A673 (cell line): ENCODE measurements at regions of chr9 and their contacts with region 1.

Region 1: DNA sequence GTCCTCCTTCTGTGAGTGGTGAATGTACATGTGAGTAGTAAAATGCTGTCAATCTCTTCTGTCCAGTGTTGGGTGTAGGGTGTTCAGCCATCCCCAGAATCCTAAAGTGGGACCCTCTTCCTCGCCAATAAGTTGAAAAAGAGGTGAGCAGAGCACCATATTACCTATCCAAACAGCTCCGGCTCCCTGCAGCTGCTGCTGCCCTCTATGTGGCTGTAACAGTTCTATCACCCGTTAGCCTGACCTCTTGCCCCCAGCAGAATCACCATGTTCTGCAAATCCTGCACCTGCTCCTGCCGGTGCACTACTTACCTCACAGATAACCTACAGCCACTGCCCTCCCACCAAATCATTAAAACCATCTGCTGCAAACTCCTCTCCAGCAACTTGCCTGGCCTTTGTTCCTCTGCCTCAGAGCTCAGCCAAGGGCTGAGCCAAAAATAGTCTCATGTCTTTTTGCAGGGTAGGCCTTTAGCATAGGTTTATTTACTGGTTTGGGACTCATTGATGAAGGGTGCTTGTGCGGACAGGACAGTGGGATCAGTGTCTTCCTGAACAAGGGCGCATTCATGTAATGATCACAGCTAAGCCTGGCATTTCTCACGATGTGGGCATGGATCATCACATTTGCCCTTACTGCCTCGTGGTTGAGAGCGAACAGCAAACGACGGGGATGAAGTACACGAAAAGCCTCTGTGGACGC is 49.6 kb upstream of the CCL21 start:
- DNase-seq: no peak
- H3K4me3 ChIP-seq: no peak overlapping the region
- H3K27ac ChIP-seq: no peak overlapping the region
- H3K4me1 ChIP-seq: no peaks in the 10 kb centered on the region
- H3K27me3 ChIP-seq: peaks cover 5% of the 10 kb centered on the region
- CTCF ChIP-seq: no peak

Region 2: GRCh38 chr9:34536685-34537084 is 222.9 kb before region 1 on chr9:
- CTCF ChIA-PET with region 1: no interaction called
- POLR2A ChIA-PET with region 1: no interaction called
- intact Hi-C with region 1: no loop called
- DNase-seq: no peak
- H3K4me3 ChIP-seq: no peak overlapping the region
- H3K27ac ChIP-seq: no peak overlapping the region
- H3K4me1 ChIP-seq: no peaks in the 10 kb centered on the region
- H3K27me3 ChIP-seq: peaks cover 13% of the 10 kb centered on the region
- CTCF ChIP-seq: no peak

Region 3: DNA sequence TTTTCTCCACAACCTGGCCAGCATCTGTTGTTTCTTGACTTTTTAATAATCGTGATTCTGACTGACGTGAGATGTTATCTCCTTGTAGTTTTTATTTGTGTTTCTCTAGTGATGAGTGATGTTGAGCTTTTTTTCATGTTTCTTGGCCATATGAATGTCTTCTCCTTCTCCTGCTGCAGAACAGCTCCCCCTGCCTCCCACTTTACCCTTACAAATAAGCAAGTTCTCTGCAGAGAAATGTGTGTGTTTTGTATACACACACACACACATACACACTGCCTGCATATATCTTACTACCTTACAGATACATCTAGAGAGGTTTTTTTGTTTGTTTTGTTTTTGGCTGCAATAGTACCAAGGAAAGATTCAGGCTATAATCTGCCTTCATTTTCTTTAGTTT is 109.8 kb after region 1 on chr9:
- CTCF ChIA-PET with region 1: interaction called, 10 read pairs
- POLR2A ChIA-PET with region 1: no interaction called
- intact Hi-C with region 1: no loop called
- DNase-seq: peak; percentile 41
- H3K4me3 ChIP-seq: no peak overlapping the region
- H3K27ac ChIP-seq: no peak overlapping the region
- H3K4me1 ChIP-seq: no peaks in the 10 kb centered on the region
- H3K27me3 ChIP-seq: no peaks in the 10 kb centered on the region
- CTCF ChIP-seq: peak; percentile 57

Region 4: GRCh38 chr9:34989003-34989945 is 229.7 kb after region 1 on chr9 and contains the start of gene DNAJB5:
- CTCF ChIA-PET with region 1: interaction called, 4 read pairs
- POLR2A ChIA-PET with region 1: no interaction called
- intact Hi-C with region 1: loop called (anchors 2 kb)
- DNase-seq: peak; percentile 100
- H3K4me3 ChIP-seq: peak within 1 kb of the TSS; percentile 85
- H3K27ac ChIP-seq: peak within 1 kb of the TSS; percentile 86
- H3K4me1 ChIP-seq: peaks cover 61% of the 10 kb centered on the region
- H3K27me3 ChIP-seq: no peaks in the 10 kb centered on the region
- CTCF ChIP-seq: no peak
- total RNA-seq, gene DNAJB5: 11.9 and 13.0 TPM in 2 replicates

Region 5: DNA sequence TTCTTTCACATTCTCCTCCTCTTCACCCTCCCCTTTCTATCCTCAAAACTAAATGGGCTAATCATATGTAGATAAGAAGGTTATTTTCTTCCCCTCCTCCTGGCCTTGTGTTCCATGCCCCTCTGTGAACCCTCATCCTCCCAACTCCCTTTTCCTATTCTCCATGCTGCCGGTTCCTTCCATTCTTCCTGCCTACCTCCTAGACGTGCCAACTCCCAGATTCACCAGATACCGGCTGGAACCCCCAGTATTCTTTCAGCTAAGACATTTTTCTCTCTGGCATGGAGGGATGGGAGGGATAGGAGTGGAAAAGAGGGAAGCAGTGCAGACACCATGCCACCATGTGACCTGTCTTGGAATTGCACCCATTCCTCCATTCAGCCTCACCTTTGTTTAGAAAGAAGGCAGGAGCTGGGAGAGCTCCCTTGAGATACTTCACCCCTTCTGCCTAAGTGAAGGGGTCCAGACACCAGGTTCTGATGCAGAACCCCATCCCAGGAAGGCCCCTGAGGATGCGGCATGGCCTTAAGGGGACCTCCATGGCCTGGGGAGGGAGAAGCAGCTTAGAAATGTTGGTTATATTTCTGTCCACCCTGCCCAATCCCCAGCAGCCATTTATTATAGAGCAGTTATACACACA is 234.8 kb after region 1 on chr9:
- CTCF ChIA-PET with region 1: interaction called, 11 read pairs
- POLR2A ChIA-PET with region 1: no interaction called
- intact Hi-C with region 1: no loop called
- DNase-seq: peak; percentile 72
- H3K4me3 ChIP-seq: no peak overlapping the region
- H3K27ac ChIP-seq: peak overlapping the region; percentile 62
- H3K4me1 ChIP-seq: peaks cover 33% of the 10 kb centered on the region
- H3K27me3 ChIP-seq: no peaks in the 10 kb centered on the region
- CTCF ChIP-seq: peak; percentile 76